Calu3 (cell line): ENCODE measurements at regions of chr17 and their contacts with region 1.

Region 1: DNA sequence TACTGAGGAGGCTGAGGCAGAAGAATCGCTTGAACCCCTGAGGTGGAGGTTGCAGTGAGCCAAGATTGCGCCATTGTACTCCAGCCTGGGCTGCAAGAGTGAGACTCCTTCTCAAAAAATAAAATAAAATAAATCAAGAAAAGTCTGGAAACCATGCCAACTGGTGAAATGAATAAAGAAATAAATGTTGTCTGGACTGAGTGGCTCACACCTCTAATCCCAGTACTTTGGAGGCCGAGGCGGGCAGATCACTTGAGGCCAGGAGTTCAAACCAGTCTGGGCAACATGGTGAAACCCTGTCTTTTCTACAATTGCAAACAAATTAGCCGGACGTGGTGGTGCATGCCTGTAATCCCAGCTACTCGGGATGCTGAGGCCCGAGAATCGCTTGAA is 744 bp upstream of the LRRC37A3 start:
- DNase-seq: peak; percentile 13
- H3K4me3 Mint-ChIP-seq: peak overlapping the region; percentile 81
- H3K27ac Mint-ChIP-seq: peak overlapping the region; percentile 83
- H3K4me1 Mint-ChIP-seq: no peaks in the 10 kb centered on the region
- H3K27me3 Mint-ChIP-seq: no peaks in the 10 kb centered on the region
- CTCF ChIP-seq: no peak

Region 2: GRCh38 chr17:64773836-64774761 is 145.9 kb before region 1 on chr17:
- CTCF ChIA-PET with region 1: interaction called, 5 read pairs
- intact Hi-C with region 1: loop called (anchors 10 kb)
- DNase-seq: peak; percentile 85
- H3K4me3 Mint-ChIP-seq: peak overlapping the region; percentile 72
- H3K27ac Mint-ChIP-seq: peak overlapping the region; percentile 68
- H3K4me1 Mint-ChIP-seq: peaks cover 28% of the 10 kb centered on the region
- H3K27me3 Mint-ChIP-seq: no peaks in the 10 kb centered on the region
- CTCF ChIP-seq: peak; percentile 57

Region 3: GRCh38 chr17:65163990-65164495 is 244.0 kb after region 1 on chr17:
- CTCF ChIA-PET with region 1: no interaction called
- intact Hi-C with region 1: no loop called
- DNase-seq: peak; percentile 8
- H3K4me3 Mint-ChIP-seq: no peak overlapping the region
- H3K27ac Mint-ChIP-seq: no peak overlapping the region
- H3K4me1 Mint-ChIP-seq: peaks cover 8% of the 10 kb centered on the region
- H3K27me3 Mint-ChIP-seq: peaks cover 15% of the 10 kb centered on the region
- CTCF ChIP-seq: no peak